Caco-2 (cell line): ENCODE measurements at regions of chr12 and their contacts with region 1.

Region 1: DNA sequence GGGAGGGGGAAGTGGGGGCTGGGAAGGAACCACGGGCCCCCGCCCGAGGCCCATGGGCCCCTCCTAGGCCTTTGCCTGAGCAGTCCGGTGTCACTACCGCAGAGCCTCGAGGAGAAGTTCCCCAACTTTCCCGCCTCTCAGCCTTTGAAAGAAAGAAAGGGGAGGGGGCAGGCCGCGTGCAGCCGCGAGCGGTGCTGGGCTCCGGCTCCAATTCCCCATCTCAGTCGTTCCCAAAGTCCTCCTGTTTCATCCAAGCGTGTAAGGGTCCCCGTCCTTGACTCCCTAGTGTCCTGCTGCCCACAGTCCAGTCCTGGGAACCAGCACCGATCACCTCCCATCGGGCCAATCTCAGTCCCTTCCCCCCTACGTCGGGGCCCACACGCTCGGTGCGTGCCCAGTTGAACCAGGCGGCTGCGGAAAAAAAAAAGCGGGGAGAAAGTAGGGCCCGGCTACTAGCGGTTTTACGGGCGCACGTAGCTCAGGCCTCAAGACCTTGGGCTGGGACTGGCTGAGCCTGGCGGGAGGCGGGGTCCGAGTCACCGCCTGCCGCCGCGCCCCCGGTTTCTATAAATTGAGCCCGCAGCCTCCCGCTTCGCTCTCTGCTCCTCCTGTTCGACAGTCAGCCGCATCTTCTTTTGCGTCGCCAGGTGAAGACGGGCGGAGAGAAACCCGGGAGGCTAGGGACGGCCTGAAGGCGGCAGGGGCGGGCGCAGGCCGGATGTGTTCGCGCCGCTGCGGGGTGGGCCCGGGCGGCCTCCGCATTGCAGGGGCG is at the start of gene GAPDH:
- DNase-seq: peak; percentile 98 to 99
- H3K4me3 ChIP-seq: peak within 1 kb of the TSS; percentile 93
- H3K4me3 Mint-ChIP-seq: peak within 1 kb of the TSS; percentile 91
- H3K27ac Mint-ChIP-seq: peak within 1 kb of the TSS; percentile 97
- H3K4me1 ChIP-seq: peaks cover 36% of the 10 kb centered on the region
- H3K4me1 Mint-ChIP-seq: peaks cover 46% of the 10 kb centered on the region
- H3K27me3 ChIP-seq: no peaks in the 10 kb centered on the region
- H3K27me3 Mint-ChIP-seq: no peaks in the 10 kb centered on the region
- CTCF ChIP-seq: no peak
- total RNA-seq, gene GAPDH: 4,975 and 5,337 TPM in 2 replicates

Region 2: GRCh38 chr12:6125310-6125608 is 408.9 kb before region 1 on chr12:
- CTCF ChIA-PET with region 1: no interaction called
- POLR2A ChIA-PET with region 1: interaction called, 12 read pairs
- intact Hi-C with region 1: no loop called
- DNase-seq: no peak
- H3K4me3 ChIP-seq: no peak overlapping the region
- H3K4me3 Mint-ChIP-seq: no peak overlapping the region
- H3K27ac Mint-ChIP-seq: no peak overlapping the region
- H3K4me1 ChIP-seq: no peaks in the 10 kb centered on the region
- H3K4me1 Mint-ChIP-seq: no peaks in the 10 kb centered on the region
- H3K27me3 ChIP-seq: no peaks in the 10 kb centered on the region
- H3K27me3 Mint-ChIP-seq: no peaks in the 10 kb centered on the region
- CTCF ChIP-seq: no peak

Region 3: DNA sequence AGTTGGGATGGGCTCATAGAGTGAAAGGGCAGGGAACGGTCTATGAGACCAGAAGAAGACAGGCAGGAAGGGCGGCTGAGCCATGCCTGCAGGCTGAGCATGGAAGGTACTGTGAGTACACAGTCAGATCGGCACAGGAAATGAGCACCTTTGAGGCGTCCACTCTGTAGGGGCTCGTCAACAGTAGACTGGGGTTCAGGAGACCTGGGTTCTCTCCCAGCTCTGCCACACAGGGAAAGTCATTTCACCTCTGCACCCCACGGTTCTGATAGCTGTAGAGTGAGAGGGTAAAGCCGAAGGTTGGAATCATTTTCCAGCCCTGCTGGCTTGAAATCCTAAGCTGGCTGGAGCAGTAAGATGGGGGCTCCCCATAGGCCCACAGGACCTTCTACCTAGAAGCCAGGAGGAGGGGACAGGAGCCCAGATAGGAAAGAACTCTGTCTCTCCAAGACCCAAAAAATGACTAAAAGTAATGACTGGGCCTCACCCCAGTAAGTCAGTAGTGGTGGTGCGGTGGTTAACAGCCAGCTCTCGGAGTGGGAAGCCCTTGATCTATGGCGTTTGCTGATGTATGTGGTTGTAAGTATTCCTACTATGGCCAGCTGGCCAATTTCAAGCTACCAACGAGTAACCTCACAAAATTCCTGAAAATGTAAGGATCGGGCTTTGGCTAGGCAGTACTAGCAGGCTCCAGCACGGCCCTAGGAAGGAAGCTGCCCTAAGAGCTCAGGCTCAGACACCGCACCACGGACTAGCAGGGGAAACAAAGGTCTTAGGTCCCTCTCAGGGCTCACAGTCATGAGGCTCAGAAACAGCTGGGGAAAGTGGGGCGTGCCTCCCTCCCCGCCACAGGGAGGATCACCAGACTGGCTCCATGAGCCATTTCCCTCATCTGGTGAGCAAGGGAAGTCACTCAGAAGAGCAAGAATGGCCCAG is 99.6 kb before region 1 on chr12:
- CTCF ChIA-PET with region 1: interaction called, 3 read pairs
- POLR2A ChIA-PET with region 1: interaction called, 17 read pairs
- intact Hi-C with region 1: no loop called
- DNase-seq: peak in 1 of 2 experiments; percentile 30
- H3K4me3 ChIP-seq: no peak overlapping the region
- H3K4me3 Mint-ChIP-seq: no peak overlapping the region
- H3K27ac Mint-ChIP-seq: no peak overlapping the region
- H3K4me1 ChIP-seq: peaks cover 12% of the 10 kb centered on the region; the same call in 1 of the 2 replicates
- H3K4me1 Mint-ChIP-seq: peaks cover 11% of the 10 kb centered on the region
- H3K27me3 ChIP-seq: no peaks in the 10 kb centered on the region
- H3K27me3 Mint-ChIP-seq: no peaks in the 10 kb centered on the region
- CTCF ChIP-seq: no peak

Region 4: DNA sequence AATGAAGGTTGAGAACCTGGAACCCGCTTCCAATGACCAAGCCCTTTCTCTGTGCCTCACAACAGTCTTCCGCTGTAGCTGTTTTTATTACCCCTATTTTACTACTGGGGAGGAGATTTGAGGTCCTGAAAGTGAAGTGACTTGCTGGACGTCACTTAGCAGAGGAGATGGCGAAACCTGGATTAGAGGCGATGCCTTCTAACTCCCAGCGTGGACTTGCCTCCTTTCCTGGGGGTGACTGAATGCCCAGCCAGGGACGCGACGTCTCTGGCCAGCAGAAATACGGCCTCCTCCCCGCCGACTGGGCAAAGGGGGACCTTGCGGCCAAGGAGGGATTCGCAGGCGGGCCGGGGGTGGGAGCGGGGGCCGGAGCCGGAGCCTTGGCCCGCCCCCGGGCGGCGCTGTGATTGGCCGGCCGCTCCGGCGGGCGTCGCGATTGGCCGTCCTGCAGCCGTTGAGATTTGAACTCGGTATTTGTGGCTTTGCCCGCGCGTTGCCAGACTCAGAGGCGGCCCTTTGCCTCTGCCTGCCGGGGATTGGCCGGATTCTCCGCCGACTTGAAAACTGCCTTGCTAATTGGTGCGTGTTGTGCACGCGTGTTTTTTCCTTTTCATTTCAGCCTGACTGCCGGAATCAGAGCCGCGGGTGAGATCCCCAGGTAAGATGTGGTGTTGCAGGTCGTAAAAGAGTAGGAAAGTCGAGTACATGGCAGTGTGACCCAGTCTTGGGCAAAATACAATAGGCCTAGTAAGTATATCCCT is 40.4 kb before region 1 on chr12 and contains the start of gene NCAPD2:
- CTCF ChIA-PET with region 1: interaction called, 13 read pairs
- POLR2A ChIA-PET with region 1: interaction called, 44 read pairs
- intact Hi-C with region 1: loop called (anchors 1 kb)
- DNase-seq: peak; percentile 98 to 99
- H3K4me3 ChIP-seq: peak within 1 kb of the TSS; percentile 81
- H3K4me3 Mint-ChIP-seq: peak within 1 kb of the TSS; percentile 92
- H3K27ac Mint-ChIP-seq: peak within 1 kb of the TSS; percentile 96
- H3K4me1 ChIP-seq: peaks cover 12% of the 10 kb centered on the region
- H3K4me1 Mint-ChIP-seq: peaks cover 10% of the 10 kb centered on the region
- H3K27me3 ChIP-seq: no peaks in the 10 kb centered on the region
- H3K27me3 Mint-ChIP-seq: no peaks in the 10 kb centered on the region
- CTCF ChIP-seq: peak in 1 of 2 experiments; percentile 17
- total RNA-seq, gene NCAPD2: 204 and 218 TPM in 2 replicates

Region 5: GRCh38 chr12:6582196-6582595 is 48.1 kb after region 1 on chr12:
- CTCF ChIA-PET with region 1: interaction called, 7 read pairs
- POLR2A ChIA-PET with region 1: interaction called, 13 read pairs
- intact Hi-C with region 1: no loop called
- DNase-seq: peak in 1 of 2 experiments; percentile 43
- H3K4me3 ChIP-seq: no peak overlapping the region
- H3K4me3 Mint-ChIP-seq: no peak overlapping the region
- H3K27ac Mint-ChIP-seq: no peak overlapping the region
- H3K4me1 ChIP-seq: no peaks in the 10 kb centered on the region
- H3K4me1 Mint-ChIP-seq: no peaks in the 10 kb centered on the region
- H3K27me3 ChIP-seq: no peaks in the 10 kb centered on the region
- H3K27me3 Mint-ChIP-seq: no peaks in the 10 kb centered on the region
- CTCF ChIP-seq: peak in 1 of 2 experiments; percentile 63

Region 6: GRCh38 chr12:6723607-6724396 is 189.7 kb after region 1 on chr12 and contains the start of gene COPS7A:
- CTCF ChIA-PET with region 1: interaction called, 6 read pairs
- POLR2A ChIA-PET with region 1: interaction called, 13 read pairs
- intact Hi-C with region 1: no loop called
- DNase-seq: peak; percentile 100
- H3K4me3 ChIP-seq: peak within 1 kb of the TSS; percentile 63
- H3K4me3 Mint-ChIP-seq: peak within 1 kb of the TSS; percentile 73
- H3K27ac Mint-ChIP-seq: peak within 1 kb of the TSS; percentile 80
- H3K4me1 ChIP-seq: peaks cover 11% of the 10 kb centered on the region; the same call in 1 of the 2 replicates
- H3K4me1 Mint-ChIP-seq: peaks cover 11% of the 10 kb centered on the region
- H3K27me3 ChIP-seq: no peaks in the 10 kb centered on the region
- H3K27me3 Mint-ChIP-seq: no peaks in the 10 kb centered on the region
- CTCF ChIP-seq: no peak
- total RNA-seq, gene COPS7A: 56.8 and 61.9 TPM in 2 replicates